Body of pancreas (tissue), 4 donors: ENCODE measurements at regions of chr9 and their contacts with region 1.

Region 1: DNA sequence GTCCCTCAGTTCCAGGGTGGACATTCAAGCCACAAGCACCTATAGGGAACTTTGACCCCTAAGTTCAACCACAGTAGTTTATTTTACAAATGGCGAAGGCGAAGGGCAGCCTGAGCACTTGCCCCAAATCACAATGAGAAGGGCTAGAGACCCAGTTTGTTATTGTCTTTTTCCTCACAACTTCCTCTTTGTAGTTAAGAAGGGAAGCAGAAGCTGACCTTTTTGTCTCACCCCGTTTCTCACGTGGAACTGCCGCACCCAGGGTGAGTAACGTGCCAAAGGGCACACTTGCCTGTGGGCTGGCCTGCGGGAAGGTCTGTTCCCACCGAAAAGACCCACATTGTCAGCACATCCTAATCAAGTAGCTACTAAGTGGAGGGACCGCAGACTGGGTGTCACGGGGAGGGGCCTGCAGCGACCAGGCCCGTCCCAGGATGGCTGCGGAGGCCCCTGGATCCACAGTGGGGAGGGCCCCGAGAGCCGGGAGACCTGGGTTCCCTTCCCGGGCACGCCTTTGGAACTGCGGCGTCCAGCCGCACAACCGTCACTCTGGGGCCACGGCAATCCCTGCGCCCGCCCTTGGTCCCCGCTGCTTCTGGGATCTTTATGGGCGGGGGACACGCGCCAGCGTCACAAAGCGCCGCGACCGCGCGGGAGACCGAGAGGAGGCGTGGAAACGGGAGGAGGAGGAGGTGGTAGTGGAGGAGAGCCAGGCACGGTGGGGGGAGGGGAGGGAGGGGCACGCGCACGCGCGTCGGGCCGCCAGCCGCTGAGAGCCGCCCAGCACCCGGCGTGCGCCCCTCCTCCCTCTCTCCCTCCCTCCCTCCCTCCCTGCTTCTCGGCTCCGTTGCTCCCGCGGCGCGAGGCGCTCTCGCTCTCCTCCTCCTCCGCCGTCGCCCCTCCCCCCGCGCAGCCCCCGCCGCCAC is at the start of gene UBE2R2:
- DNase-seq: peak; percentile 91 to 94 (median 92)
- ATAC-seq: peak; percentile 91
- H3K4me3 ChIP-seq: peak within 1 kb of the TSS; percentile 90 to 91
- H3K27ac ChIP-seq: peak within 1 kb of the TSS; percentile 89 to 100 (median 98)
- H3K4me1 ChIP-seq: peaks cover 52% of the 10 kb centered on the region
- H3K27me3 ChIP-seq: no peaks in the 10 kb centered on the region
- CTCF ChIP-seq: no peak
- POLR2A ChIP-seq: peak; percentile 68 to 89 (median 85)
- total RNA-seq, gene UBE2R2: 26.7 to 31.4 TPM

Region 2: GRCh38 chr9:33659921-33660320 is 156.7 kb before region 1 on chr9:
- intact Hi-C with region 1: no loop called
- DNase-seq: no peak
- ATAC-seq: no peak
- H3K4me3 ChIP-seq: no peak overlapping the region
- H3K27ac ChIP-seq: no peak overlapping the region
- H3K4me1 ChIP-seq: no peaks in the 10 kb centered on the region
- H3K27me3 ChIP-seq: no peaks in the 10 kb centered on the region
- CTCF ChIP-seq: no peak
- POLR2A ChIP-seq: no peak

Region 3: DNA sequence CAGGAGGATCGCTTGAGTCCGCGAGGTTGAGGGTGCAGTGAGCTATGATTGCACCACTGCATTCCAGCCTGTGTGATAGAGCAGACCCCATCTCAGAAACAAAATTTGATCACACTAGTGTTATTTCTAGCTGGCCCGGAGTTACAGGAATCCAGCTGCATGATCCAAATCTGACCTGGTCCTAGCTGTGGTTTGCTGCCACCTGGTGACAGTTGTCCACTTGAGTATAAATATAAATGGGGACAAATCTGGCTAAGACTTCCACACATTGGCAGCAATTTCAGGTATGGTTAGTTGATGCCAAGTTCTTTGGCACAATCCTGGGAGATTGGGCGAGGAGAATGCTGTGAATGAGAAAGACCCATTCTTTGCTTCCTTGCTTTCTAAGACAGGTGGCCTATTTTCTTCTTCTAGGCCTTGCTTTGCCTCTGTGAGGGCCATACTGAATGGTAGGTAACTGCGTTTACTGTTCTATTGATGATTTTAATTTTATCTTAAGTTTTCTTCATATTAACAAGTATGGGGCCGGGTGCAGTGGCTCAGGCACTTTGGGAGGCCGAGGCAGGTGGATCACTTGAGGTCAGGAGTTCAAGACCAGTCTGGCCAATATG is 35.7 kb after region 1 on chr9:
- intact Hi-C with region 1: loop called (anchors 5 kb)
- DNase-seq: peak; percentile 89 to 94 (median 92)
- ATAC-seq: peak; percentile 84
- H3K4me3 ChIP-seq: no peak overlapping the region
- H3K27ac ChIP-seq: peak overlapping the region in 3 of 4 donors; percentile 36 to 79 (median 55)
- H3K4me1 ChIP-seq: peaks cover 96% of the 10 kb centered on the region
- H3K27me3 ChIP-seq: no peaks in the 10 kb centered on the region
- CTCF ChIP-seq: peak; percentile 57 to 96 (median 86)
- POLR2A ChIP-seq: no peak